GM12878 (cell line): ENCODE measurements at regions of chr4 and their contacts with region 1.

Region 1: DNA sequence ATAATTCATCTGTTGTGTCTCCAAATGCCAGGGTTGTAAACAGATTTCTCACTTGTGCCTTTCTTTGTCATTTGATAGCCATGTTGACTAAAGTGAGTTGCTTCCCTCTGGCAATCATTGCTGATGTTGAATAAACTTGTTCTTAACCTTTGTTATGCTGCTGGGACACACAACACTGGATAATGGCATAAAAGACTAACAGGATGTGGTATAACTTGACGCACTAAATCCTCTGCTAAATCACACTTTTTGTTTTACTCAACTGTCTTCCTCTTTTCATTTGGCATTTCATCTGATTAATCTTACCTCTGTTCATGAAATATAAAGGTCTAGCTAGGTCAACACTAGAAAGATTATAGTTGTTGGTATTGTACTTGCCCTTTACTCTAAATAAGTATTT is 17.6 kb upstream of the CXCL5 start:
- DNase-seq: no peak
- ATAC-seq: peak; percentile 79
- H3K4me3 ChIP-seq: no peak overlapping the region
- H3K27ac ChIP-seq: no peak overlapping the region
- H3K4me1 ChIP-seq: no peaks in the 10 kb centered on the region
- H3K27me3 ChIP-seq: no peaks in the 10 kb centered on the region
- CTCF ChIP-seq: no peak
- EP300 ChIP-seq: 0 out of 4 replicates have a peak, but pooled peaks of 1 of the 2 experiments have one; percentile 62
- POLR2A ChIP-seq: no peak
- RAD21 ChIP-seq: no peak

Region 2: GRCh38 chr4:74006009-74006476 is 10.0 kb before region 1 on chr4:
- CTCF ChIA-PET with region 1: no interaction called
- POLR2A ChIA-PET with region 1: no interaction called
- RAD21 ChIA-PET with region 1: no interaction called
- SMC1A ChIA-PET with region 1: interaction called, 10 read pairs
- in situ Hi-C with region 1: no loop called
- intact Hi-C with region 1: no loop called
- DNase-seq: no peak
- ATAC-seq: peak; percentile 70
- H3K4me3 ChIP-seq: no peak overlapping the region
- H3K27ac ChIP-seq: no peak overlapping the region
- H3K4me1 ChIP-seq: no peaks in the 10 kb centered on the region
- H3K27me3 ChIP-seq: no peaks in the 10 kb centered on the region
- CTCF ChIP-seq: no peak
- EP300 ChIP-seq: no peak
- POLR2A ChIP-seq: no peak
- RAD21 ChIP-seq: no peak

Region 3: DNA sequence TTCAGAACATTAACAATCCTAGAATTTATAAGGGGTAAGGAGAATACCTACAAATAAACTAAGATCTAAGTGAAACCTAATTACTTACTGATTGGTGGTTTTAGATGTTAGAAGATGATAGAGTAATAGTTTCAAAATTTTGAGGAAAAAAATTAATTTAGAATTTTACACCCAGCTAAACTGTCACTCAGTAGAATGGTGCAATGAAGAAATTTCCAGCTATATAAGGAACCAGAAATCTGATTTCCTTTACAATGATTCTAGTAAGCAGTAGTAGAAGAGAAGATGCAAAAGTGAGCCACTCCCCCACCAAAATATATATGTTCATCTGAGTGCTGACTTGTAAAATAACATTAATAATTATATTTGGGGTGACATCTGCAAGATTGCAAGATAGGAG is 236.9 kb after region 1 on chr4:
- CTCF ChIA-PET with region 1: no interaction called
- POLR2A ChIA-PET with region 1: no interaction called
- RAD21 ChIA-PET with region 1: no interaction called
- SMC1A ChIA-PET with region 1: no interaction called
- in situ Hi-C with region 1: no loop called
- intact Hi-C with region 1: no loop called
- DNase-seq: no peak
- ATAC-seq: no peak
- H3K4me3 ChIP-seq: no peak overlapping the region
- H3K27ac ChIP-seq: no peak overlapping the region
- H3K4me1 ChIP-seq: no peaks in the 10 kb centered on the region
- H3K27me3 ChIP-seq: no peaks in the 10 kb centered on the region
- CTCF ChIP-seq: no peak
- EP300 ChIP-seq: no peak
- POLR2A ChIP-seq: no peak
- RAD21 ChIP-seq: no peak